ENCODE measurements at regions of chr22 and their contacts with region 1.

Region 1: GRCh38 chr22:27799334-27800249 is 2.0 kb downstream of the MN1 start:
- DNase-seq: no peak
- H3K4me3 ChIP-seq: no peak overlapping the region
- H3K27ac ChIP-seq: no peak overlapping the region
- H3K4me1 ChIP-seq: no peaks in the 10 kb centered on the region
- CTCF ChIP-seq: no peak

Region 2: GRCh38 chr22:27405672-27406388 is 393.8 kb before region 1 on chr22:
- CTCF ChIA-PET with region 1: no interaction called
- POLR2A ChIA-PET with region 1: no interaction called
- intact Hi-C with region 1: loop called (anchors 10 kb)
- DNase-seq: peak; percentile 46
- H3K4me3 ChIP-seq: no peak overlapping the region
- H3K27ac ChIP-seq: no peak overlapping the region
- H3K4me1 ChIP-seq: no peaks in the 10 kb centered on the region
- CTCF ChIP-seq: peak; percentile 86

Region 3: GRCh38 chr22:27740192-27740748 is 59.3 kb before region 1 on chr22:
- CTCF ChIA-PET with region 1: no interaction called
- POLR2A ChIA-PET with region 1: no interaction called
- intact Hi-C with region 1: no loop called
- DNase-seq: no peak
- H3K4me3 ChIP-seq: no peak overlapping the region
- H3K27ac ChIP-seq: no peak overlapping the region
- H3K4me1 ChIP-seq: no peaks in the 10 kb centered on the region
- CTCF ChIP-seq: no peak

Region 4: GRCh38 chr22:28075358-28075981 is 275.9 kb after region 1 on chr22:
- CTCF ChIA-PET with region 1: no interaction called
- POLR2A ChIA-PET with region 1: no interaction called
- intact Hi-C with region 1: no loop called
- DNase-seq: no peak
- H3K4me3 ChIP-seq: no peak overlapping the region
- H3K27ac ChIP-seq: no peak overlapping the region
- H3K4me1 ChIP-seq: no peaks in the 10 kb centered on the region
- CTCF ChIP-seq: no peak

Measured in OCI-LY7 (cell line).